Naive thymus-derived CD8-positive, alpha-beta T cell (primary cell): ENCODE measurements at regions of chr2 and their contacts with region 1.

Region 1: DNA sequence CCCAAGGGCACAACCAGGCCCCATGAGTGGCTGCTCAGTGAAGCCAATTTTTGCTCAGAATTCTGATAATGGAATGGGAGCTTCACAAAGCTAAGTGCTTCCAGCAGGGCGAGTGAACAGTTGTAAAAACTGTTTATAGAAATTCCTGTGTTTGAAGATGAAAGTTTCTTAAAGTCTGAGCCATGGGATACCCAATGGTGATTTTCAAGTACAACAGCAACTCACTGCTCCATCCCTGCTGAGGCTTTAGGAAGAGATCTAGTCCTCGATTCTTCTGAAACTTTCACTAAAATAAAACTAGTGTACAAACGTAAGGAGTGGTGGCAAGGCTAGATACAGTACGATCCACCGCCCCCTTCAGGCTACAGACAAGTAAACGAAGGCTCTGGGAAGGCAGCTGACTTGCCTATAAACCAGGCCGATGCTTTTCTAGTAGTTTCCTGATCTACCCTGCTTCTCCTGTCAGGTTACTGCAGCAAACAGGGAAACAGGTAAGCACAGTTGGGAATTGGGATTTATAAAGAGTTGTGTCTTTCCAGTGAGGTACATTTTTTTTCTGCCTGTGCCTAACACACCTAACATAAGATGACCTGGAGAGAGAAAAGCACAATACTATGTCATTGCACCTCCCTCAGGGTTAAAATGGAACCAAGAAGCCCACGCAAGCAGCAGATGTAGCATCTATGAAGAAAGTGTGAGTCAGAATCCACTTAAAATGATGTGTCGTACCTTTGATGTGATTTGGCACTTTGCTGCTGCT is 108.7 kb downstream of the UXS1 start:
- DNase-seq: peak in 9 of 10 donors; percentile 39 to 81 (median 55)
- ATAC-seq: peak; percentile 94 to 96
- H3K4me3 Mint-ChIP-seq: peak overlapping the region; percentile 60 to 82 (median 70)
- H3K27ac Mint-ChIP-seq: peak overlapping the region; percentile 79 to 96 (median 95)
- H3K4me1 Mint-ChIP-seq: peaks cover 44 to 63% (median 63%) of the 10 kb centered on the region in 4 donors
- H3K27me3 Mint-ChIP-seq: no peaks in the 10 kb centered on the region

Region 2: GRCh38 chr2:105950521-105951383 is 134.6 kb before region 1 on chr2:
- POLR2A ChIA-PET with region 1: no interaction called
- DNase-seq: no peak
- ATAC-seq: peak in 1 of 2 donors; percentile 17
- H3K4me3 Mint-ChIP-seq: peak overlapping the region in 8 of 10 donors; percentile 2 to 77 (median 44)
- H3K27ac Mint-ChIP-seq: peak overlapping the region in 6 of 10 donors; percentile 28 to 86 (median 66)
- H3K4me1 Mint-ChIP-seq: peaks cover 43 to 71% (median 65%) of the 10 kb centered on the region in 4 donors
- H3K27me3 Mint-ChIP-seq: no peaks in the 10 kb centered on the region

Region 3: DNA sequence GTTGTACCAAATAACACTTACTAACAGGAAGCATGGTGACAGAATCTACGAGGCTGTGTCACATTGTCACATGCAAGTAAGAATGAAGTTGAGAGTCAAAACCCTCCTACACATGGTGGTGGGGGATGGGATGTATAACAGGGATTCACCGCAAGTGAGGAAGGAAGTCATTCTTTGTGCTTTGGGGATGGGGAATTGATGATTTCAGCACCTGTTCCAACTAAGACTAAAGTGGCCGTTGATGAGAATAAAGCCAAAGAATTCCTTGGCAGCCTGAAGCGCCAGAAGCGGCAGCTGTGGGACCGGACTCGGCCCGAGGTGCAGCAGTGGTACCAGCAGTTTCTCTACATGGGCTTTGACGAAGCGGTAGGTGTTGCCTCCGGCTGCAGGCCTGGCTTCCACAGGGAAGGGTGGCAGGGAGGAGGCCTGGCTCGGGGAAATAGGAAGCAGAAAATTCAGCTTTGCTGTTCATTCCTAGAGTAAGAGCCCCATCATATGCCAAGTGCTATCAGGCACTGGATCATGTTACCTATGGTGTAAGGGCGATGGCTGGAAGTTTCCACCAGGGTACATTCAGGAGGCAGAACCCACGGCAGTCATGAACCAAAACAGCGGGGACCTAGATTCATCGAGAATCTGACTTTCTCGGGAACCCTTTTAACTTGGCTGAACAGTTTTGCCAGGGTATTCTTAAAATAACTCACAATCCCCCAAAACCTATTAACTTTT is 11.5 kb before region 1 on chr2:
- POLR2A ChIA-PET with region 1: interaction called, 10 read pairs
- DNase-seq: no peak
- ATAC-seq: no peak
- H3K4me3 Mint-ChIP-seq: peak overlapping the region in 1 of 10 donors; percentile 45
- H3K27ac Mint-ChIP-seq: peak overlapping the region in 5 of 10 donors; percentile 22 to 70 (median 43)
- H3K4me1 Mint-ChIP-seq: peaks cover 20 to 49% (median 30%) of the 10 kb centered on the region in 4 donors
- H3K27me3 Mint-ChIP-seq: peaks cover 0 to 2% (median 0%) of the 10 kb centered on the region in 5 donors

Region 4: GRCh38 chr2:106137731-106138521 is 52.6 kb after region 1 on chr2:
- POLR2A ChIA-PET with region 1: no interaction called
- DNase-seq: peak in 5 of 10 donors; percentile 11 to 48 (median 27)
- ATAC-seq: peak; percentile 77 to 83
- H3K4me3 Mint-ChIP-seq: peak overlapping the region; percentile 69 to 98 (median 82)
- H3K27ac Mint-ChIP-seq: peak overlapping the region; percentile 79 to 97 (median 92)
- H3K4me1 Mint-ChIP-seq: peaks cover 33 to 47% (median 47%) of the 10 kb centered on the region in 4 donors
- H3K27me3 Mint-ChIP-seq: no peaks in the 10 kb centered on the region